Activated CD8-positive, alpha-beta T cell treated with anti-CD3 and anti-CD28 coated beads for 36 hours (primary cell): ENCODE measurements at regions of chr3 and their contacts with region 1.

Region 1: DNA sequence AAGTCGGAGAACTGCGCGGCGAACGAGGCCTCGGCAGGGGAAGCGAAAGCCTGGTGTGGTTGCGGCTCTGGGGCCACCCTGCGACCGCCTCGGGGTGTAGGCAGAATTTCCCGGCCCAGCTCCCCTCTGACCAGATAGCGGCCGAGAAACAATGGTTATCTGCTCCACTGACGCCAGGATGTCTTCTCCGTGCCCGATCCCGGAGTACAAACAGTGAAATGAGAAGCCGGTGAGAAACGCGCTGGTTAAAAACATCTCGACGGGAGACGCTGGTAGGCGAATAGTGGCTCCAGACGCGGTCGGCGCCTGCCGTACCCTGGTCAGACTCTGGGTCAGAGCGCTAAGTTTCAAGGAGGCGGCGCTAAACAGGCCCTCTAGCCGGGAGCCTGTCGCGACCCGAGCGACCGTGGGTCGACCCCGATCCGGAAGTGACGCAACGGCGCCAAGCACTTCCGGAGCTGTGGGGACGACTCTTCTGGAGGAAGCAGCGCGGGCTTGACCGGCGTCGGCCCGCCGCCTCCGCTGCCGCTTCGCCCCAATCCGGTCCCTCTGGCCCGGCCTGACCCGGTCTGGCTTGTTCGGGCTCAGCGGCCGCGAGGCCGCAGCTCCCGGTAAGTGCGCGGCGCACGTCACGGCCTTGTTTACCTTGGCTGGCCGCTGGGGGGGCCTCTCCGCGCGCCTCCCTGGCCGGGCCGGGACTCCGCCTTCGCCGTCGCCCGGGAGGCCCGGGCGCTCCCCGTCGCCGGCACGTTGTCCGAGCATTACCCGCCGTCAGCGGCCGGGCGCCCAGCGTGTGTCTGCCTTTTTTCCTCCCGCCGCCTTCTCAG is at the start of gene ARIH2:
- DNase-seq: peak; percentile 93
- ATAC-seq: peak; percentile 79
- H3K4me3 Mint-ChIP-seq: peak within 1 kb of the TSS; percentile 90
- H3K27ac Mint-ChIP-seq: peak within 1 kb of the TSS; percentile 99
- H3K4me1 Mint-ChIP-seq: peaks cover 26% of the 10 kb centered on the region
- H3K27me3 Mint-ChIP-seq: no peaks in the 10 kb centered on the region
- CTCF ChIP-seq: peak; percentile 39
- total RNA-seq, gene ARIH2: 98.2 to 115 TPM

Region 2: GRCh38 chr3:48898383-48899234 is 20.0 kb before region 1 on chr3 and contains the start of gene SLC25A20:
- CTCF ChIA-PET with region 1: interaction called, 13 read pairs
- POLR2A ChIA-PET with region 1: interaction called, 28 read pairs
- intact Hi-C with region 1: no loop called
- DNase-seq: peak; percentile 95
- ATAC-seq: peak; percentile 97
- H3K4me3 Mint-ChIP-seq: peak within 1 kb of the TSS; percentile 79
- H3K27ac Mint-ChIP-seq: peak within 1 kb of the TSS; percentile 96
- H3K4me1 Mint-ChIP-seq: peaks cover 32% of the 10 kb centered on the region
- H3K27me3 Mint-ChIP-seq: no peaks in the 10 kb centered on the region
- CTCF ChIP-seq: no peak
- total RNA-seq, gene SLC25A20: 14.8 to 16.8 TPM

Region 3: GRCh38 chr3:48935530-48935929 is 16.9 kb after region 1 on chr3:
- CTCF ChIA-PET with region 1: interaction called, 6 read pairs
- POLR2A ChIA-PET with region 1: interaction called, 35 read pairs
- intact Hi-C with region 1: no loop called
- DNase-seq: no peak
- ATAC-seq: no peak
- H3K4me3 Mint-ChIP-seq: no peak overlapping the region
- H3K27ac Mint-ChIP-seq: peak overlapping the region; percentile 2
- H3K4me1 Mint-ChIP-seq: peaks cover 44% of the 10 kb centered on the region
- H3K27me3 Mint-ChIP-seq: no peaks in the 10 kb centered on the region
- CTCF ChIP-seq: no peak

Region 4: GRCh38 chr3:49021813-49022687 is 103.4 kb after region 1 on chr3 and contains the start of gene NDUFAF3:
- CTCF ChIA-PET with region 1: interaction called, 3 read pairs
- POLR2A ChIA-PET with region 1: interaction called, 19 read pairs
- intact Hi-C with region 1: no loop called
- DNase-seq: peak; percentile 95
- ATAC-seq: peak; percentile 74
- H3K4me3 Mint-ChIP-seq: peak within 1 kb of the TSS; percentile 87
- H3K27ac Mint-ChIP-seq: peak within 1 kb of the TSS; percentile 94
- H3K4me1 Mint-ChIP-seq: peaks cover 48% of the 10 kb centered on the region
- H3K27me3 Mint-ChIP-seq: no peaks in the 10 kb centered on the region
- CTCF ChIP-seq: peak; percentile 99
- total RNA-seq, gene NDUFAF3: 90.7 to 95.5 TPM